ENCODE measurements at regions of chr9 and their contacts with region 1.

Region 1: DNA sequence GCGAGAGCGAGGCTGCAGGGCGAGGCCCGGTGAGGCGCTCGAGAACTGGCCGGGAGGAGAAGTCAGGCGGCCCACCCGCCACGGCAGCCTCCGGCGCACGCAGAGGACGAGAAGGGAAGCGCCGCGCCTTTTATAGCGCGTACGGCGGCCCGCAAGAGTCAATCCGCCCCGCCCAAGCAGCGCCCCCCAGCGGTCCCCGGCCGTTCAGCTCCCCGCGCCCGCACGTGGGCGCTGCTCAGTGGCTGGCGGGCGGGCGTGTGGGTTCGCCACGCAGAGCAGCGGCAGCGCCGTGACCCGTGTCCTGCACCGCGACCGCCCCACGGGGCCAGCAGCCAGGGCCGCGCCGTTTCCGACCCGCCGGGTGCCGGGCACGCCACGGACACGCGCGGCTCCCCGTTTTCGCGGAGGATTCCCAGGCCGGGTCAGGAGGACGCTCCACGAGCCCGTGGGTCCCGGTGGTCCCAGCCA is 14.6 kb downstream of the LCN10 start:
- DNase-seq: peak; percentile 87 to 97 (median 92)
- ATAC-seq: peak; percentile 96
- H3K4me3 ChIP-seq: peak overlapping the region; percentile 87
- H3K4me3 Mint-ChIP-seq: peak overlapping the region in 9 of 10 donors; percentile 47 to 99 (median 95)
- H3K27ac ChIP-seq: peak overlapping the region; percentile 83
- H3K27ac Mint-ChIP-seq: peak overlapping the region in 7 of 9 donors; percentile 47 to 93 (median 92)
- H3K4me1 ChIP-seq: peaks cover 16 to 17% of the 10 kb centered on the region in 2 donors
- H3K4me1 Mint-ChIP-seq: peaks cover 12 to 37% (median 28%) of the 10 kb centered on the region in 7 donors
- H3K27me3 ChIP-seq: no peaks in the 10 kb centered on the region
- H3K27me3 Mint-ChIP-seq: peaks cover 0 to 5% (median 0%) of the 10 kb centered on the region in 5 donors

Region 2: DNA sequence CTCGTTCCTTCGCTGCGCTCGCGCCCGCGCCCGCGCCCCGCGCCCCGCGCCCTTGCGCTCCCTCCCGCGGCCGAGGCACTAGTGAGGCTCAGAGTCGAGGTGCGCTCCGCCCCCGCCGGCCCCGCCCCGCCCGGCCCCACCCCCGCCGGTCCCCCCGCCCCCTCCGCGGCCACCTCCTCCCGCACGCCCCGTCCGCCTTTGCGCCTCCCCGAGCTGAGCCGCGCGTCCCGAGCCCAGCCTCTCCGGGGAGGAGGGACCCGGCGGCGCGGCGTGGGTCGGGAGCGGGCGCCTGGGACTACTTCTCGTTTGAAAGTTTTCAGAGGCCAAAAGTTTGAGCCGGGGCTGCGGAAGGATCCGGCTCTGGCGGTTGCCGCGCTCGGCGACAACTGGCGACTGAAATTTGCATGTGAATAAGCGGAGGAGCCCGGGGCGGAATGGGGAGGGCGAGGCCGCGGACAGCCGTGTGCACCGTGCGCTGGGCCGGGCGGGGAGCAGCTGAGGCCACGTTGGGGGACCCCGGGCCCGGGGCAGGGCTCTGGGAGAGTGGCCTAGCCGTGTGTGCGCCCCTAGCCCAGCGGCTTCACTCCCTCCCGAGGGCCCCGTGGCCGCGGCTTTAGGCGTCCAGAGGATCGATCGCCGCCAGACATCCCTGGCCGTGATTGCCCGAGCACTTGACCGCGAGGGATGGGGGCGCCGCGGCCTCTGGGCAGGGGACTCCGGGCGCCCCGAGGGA is 182.0 kb before region 1 on chr9 and contains the start of gene NOTCH1:
- CTCF ChIA-PET with region 1: no interaction called
- POLR2A ChIA-PET with region 1: interaction called, 3 read pairs
- intact Hi-C with region 1: loop called in 1 of 2 experiments (anchors 5 kb)
- DNase-seq: peak; percentile 77 to 91 (median 86)
- ATAC-seq: peak; percentile 89
- H3K4me3 ChIP-seq: peak within 1 kb of the TSS; percentile 81
- H3K4me3 Mint-ChIP-seq: peak within 1 kb of the TSS; percentile 78 to 95 (median 88)
- H3K27ac ChIP-seq: peak within 1 kb of the TSS; percentile 80
- H3K27ac Mint-ChIP-seq: peak within 1 kb of the TSS; percentile 57 to 90 (median 81)
- H3K4me1 ChIP-seq: peaks cover 20 to 32% of the 10 kb centered on the region in 2 donors
- H3K4me1 Mint-ChIP-seq: peaks cover under 1 to 43% (median 28%) of the 10 kb centered on the region in 7 donors
- H3K27me3 ChIP-seq: no peaks in the 10 kb centered on the region
- H3K27me3 Mint-ChIP-seq: no peaks in the 10 kb centered on the region
- total RNA-seq, gene NOTCH1: 49.7 to 92.9 (median 58.0) TPM

Region 3: DNA sequence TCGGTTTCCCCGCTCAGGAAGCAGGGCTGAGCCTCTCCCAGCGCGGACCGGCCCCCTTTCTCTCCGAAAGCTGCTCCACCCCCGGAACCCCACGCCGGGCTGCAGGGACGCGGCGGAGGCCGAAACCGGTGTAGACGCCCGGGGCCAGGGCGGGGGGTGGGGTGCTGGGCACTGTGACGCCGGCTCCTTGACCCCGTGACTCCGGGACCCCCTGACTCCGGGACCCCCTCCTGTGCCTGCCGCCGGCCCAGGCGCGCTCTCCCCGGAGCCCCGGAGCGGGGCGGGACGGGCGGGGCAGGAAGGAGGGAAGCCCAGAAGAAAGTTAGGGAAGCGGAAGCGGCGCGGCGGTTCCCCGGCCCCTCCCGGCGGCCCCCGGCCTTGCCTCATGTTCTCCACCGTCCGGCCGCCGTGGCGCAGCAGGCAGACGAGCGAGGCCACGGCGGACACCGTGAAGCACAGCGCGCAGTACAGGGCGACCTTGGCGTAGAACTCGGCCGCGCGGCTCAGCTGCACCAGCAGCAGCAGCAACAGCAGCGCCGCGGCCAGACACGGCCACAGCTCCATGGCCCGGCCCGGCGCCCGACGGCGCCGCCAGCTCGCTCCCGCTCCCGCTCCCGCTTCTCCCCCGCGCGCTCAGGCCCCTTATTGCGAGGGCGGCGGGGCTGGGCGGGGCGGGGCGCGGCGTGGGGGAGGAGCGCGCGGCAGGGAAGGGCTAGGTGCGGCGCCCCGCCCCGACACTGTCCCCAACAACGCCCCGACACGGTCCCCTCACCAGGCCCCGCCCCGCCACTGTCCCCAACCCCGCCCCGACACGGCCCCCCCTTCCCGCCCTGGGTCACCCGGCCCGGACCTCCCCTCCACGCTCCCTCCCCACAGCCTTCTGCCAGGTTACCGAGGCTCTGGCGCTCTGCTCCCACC is 41.1 kb before region 1 on chr9 and contains the start of gene AGPAT2:
- CTCF ChIA-PET with region 1: interaction called, 3 read pairs
- POLR2A ChIA-PET with region 1: interaction called, 9 read pairs
- intact Hi-C with region 1: loop called (anchors 5 kb)
- DNase-seq: peak in 8 of 9 donors; percentile 30 to 77 (median 37)
- ATAC-seq: peak; percentile 93
- H3K4me3 ChIP-seq: peak within 1 kb of the TSS; percentile 52
- H3K4me3 Mint-ChIP-seq: peak within 1 kb of the TSS; percentile 61 to 85 (median 78)
- H3K27ac ChIP-seq: peak within 1 kb of the TSS; percentile 49
- H3K27ac Mint-ChIP-seq: peak within 1 kb of the TSS in 2 of 9 donors; percentile 38 to 78
- H3K4me1 ChIP-seq: peaks cover 5 to 7% of the 10 kb centered on the region in 2 donors
- H3K4me1 Mint-ChIP-seq: peaks cover 0 to 6% (median 0%) of the 10 kb centered on the region in 7 donors
- H3K27me3 ChIP-seq: no peaks in the 10 kb centered on the region
- H3K27me3 Mint-ChIP-seq: no peaks in the 10 kb centered on the region
- total RNA-seq, gene AGPAT2: 2.3 to 20.6 (median 8.5) TPM

Region 4: GRCh38 chr9:136713548-136714457 is 14.3 kb before region 1 on chr9:
- CTCF ChIA-PET with region 1: no interaction called
- POLR2A ChIA-PET with region 1: interaction called, 11 read pairs
- intact Hi-C with region 1: no loop called
- DNase-seq: no peak
- ATAC-seq: no peak
- H3K4me3 ChIP-seq: no peak overlapping the region
- H3K4me3 Mint-ChIP-seq: peak overlapping the region in 2 of 10 donors; percentile 21 to 50
- H3K27ac ChIP-seq: no peak overlapping the region
- H3K27ac Mint-ChIP-seq: peak overlapping the region in 2 of 9 donors; percentile 23 to 62
- H3K4me1 ChIP-seq: no peaks in the 10 kb centered on the region
- H3K4me1 Mint-ChIP-seq: peaks cover 0 to 8% (median 6%) of the 10 kb centered on the region in 7 donors
- H3K27me3 ChIP-seq: peaks cover 0 to 9% of the 10 kb centered on the region in 2 donors
- H3K27me3 Mint-ChIP-seq: peaks cover 22 to 37% (median 35%) of the 10 kb centered on the region in 5 donors

Region 5: GRCh38 chr9:137086531-137087408 is 358.7 kb after region 1 on chr9 and contains the start of gene MAN1B1:
- CTCF ChIA-PET with region 1: no interaction called
- POLR2A ChIA-PET with region 1: no interaction called
- intact Hi-C with region 1: loop called in 1 of 2 experiments (anchors 1 kb)
- DNase-seq: peak; percentile 96 to 100 (median 99)
- ATAC-seq: peak; percentile 92
- H3K4me3 ChIP-seq: peak within 1 kb of the TSS; percentile 73
- H3K4me3 Mint-ChIP-seq: peak within 1 kb of the TSS; percentile 88 to 96 (median 92)
- H3K27ac ChIP-seq: peak within 1 kb of the TSS; percentile 92
- H3K27ac Mint-ChIP-seq: peak within 1 kb of the TSS; percentile 92 to 98 (median 95)
- H3K4me1 ChIP-seq: peaks cover 18% of the 10 kb centered on the region in 2 donors
- H3K4me1 Mint-ChIP-seq: peaks cover 25 to 34% (median 30%) of the 10 kb centered on the region in 7 donors
- H3K27me3 ChIP-seq: no peaks in the 10 kb centered on the region
- H3K27me3 Mint-ChIP-seq: no peaks in the 10 kb centered on the region
- total RNA-seq, gene MAN1B1: 57.3 to 74.2 (median 70.2) TPM

Region 6: GRCh38 chr9:137247135-137247915 is 519.2 kb after region 1 on chr9:
- CTCF ChIA-PET with region 1: no interaction called
- POLR2A ChIA-PET with region 1: no interaction called
- intact Hi-C with region 1: no loop called
- DNase-seq: no peak
- ATAC-seq: no peak
- H3K4me3 ChIP-seq: no peak overlapping the region
- H3K4me3 Mint-ChIP-seq: no peak overlapping the region
- H3K27ac ChIP-seq: no peak overlapping the region
- H3K27ac Mint-ChIP-seq: no peak overlapping the region
- H3K4me1 ChIP-seq: peaks cover 5 to 6% of the 10 kb centered on the region in 2 donors
- H3K4me1 Mint-ChIP-seq: peaks cover 6 to 16% (median 7%) of the 10 kb centered on the region in 7 donors
- H3K27me3 ChIP-seq: no peaks in the 10 kb centered on the region
- H3K27me3 Mint-ChIP-seq: no peaks in the 10 kb centered on the region

Measured in naive thymus-derived CD4-positive, alpha-beta T cell (primary cell).